ENCODE measurements at regions of chr5 and their contacts with region 1.

Region 1: GRCh38 chr5:30368064-30368463 is 825.4 kb upstream of the CDH6 start:
- DNase-seq: no peak
- H3K4me3 ChIP-seq: no peak overlapping the region
- H3K27ac ChIP-seq: no peak overlapping the region
- H3K4me1 ChIP-seq: no peaks in the 10 kb centered on the region
- H3K27me3 ChIP-seq: no peaks in the 10 kb centered on the region
- CTCF ChIP-seq: no peak
- EP300 ChIP-seq: no peak
- POLR2A ChIP-seq: no peak

Region 2: GRCh38 chr5:30092548-30092947 is 275.5 kb before region 1 on chr5:
- in situ Hi-C with region 1: no loop called
- intact Hi-C with region 1: no loop called
- DNase-seq: no peak
- H3K4me3 ChIP-seq: no peak overlapping the region
- H3K27ac ChIP-seq: no peak overlapping the region
- H3K4me1 ChIP-seq: no peaks in the 10 kb centered on the region
- H3K27me3 ChIP-seq: no peaks in the 10 kb centered on the region
- CTCF ChIP-seq: no peak
- EP300 ChIP-seq: no peak
- POLR2A ChIP-seq: no peak

Region 3: GRCh38 chr5:30401479-30402058 is 33.5 kb after region 1 on chr5:
- in situ Hi-C with region 1: no loop called
- intact Hi-C with region 1: loop called (anchors 1 kb)
- DNase-seq: peak; percentile 9
- H3K4me3 ChIP-seq: no peak overlapping the region
- H3K27ac ChIP-seq: no peak overlapping the region
- H3K4me1 ChIP-seq: no peaks in the 10 kb centered on the region
- H3K27me3 ChIP-seq: no peaks in the 10 kb centered on the region
- CTCF ChIP-seq: peak in 4 of 5 experiments; percentile 11 to 28 (median 18)
- EP300 ChIP-seq: no peak
- POLR2A ChIP-seq: no peak

Region 4: DNA sequence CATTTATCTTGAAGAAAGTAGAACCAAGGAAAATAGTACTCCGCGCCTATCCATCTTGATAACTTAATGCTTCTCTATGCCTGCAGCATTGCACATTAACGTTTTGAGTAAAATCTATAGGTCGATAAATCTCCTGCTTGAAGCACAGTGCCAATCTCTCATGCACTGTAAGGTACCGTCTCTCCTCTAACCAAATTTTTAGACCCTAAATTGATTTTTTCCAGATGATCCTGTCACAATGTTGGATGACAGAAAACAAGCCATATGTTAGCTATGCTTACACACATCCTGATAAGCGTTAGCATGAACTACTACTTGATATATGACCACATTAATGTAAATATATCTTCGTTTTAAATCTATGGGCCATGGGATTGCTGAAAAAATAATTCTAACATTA is 101.6 kb after region 1 on chr5:
- in situ Hi-C with region 1: no loop called
- intact Hi-C with region 1: no loop called
- DNase-seq: no peak
- H3K4me3 ChIP-seq: no peak overlapping the region
- H3K27ac ChIP-seq: no peak overlapping the region
- H3K4me1 ChIP-seq: no peaks in the 10 kb centered on the region
- H3K27me3 ChIP-seq: no peaks in the 10 kb centered on the region
- CTCF ChIP-seq: no peak
- EP300 ChIP-seq: no peak
- POLR2A ChIP-seq: no peak

Measured in transverse colon (tissue), 4 donors.